Lower leg skin (tissue), 4 donors: ENCODE measurements at regions of chr7 and their contacts with region 1.

Region 1: DNA sequence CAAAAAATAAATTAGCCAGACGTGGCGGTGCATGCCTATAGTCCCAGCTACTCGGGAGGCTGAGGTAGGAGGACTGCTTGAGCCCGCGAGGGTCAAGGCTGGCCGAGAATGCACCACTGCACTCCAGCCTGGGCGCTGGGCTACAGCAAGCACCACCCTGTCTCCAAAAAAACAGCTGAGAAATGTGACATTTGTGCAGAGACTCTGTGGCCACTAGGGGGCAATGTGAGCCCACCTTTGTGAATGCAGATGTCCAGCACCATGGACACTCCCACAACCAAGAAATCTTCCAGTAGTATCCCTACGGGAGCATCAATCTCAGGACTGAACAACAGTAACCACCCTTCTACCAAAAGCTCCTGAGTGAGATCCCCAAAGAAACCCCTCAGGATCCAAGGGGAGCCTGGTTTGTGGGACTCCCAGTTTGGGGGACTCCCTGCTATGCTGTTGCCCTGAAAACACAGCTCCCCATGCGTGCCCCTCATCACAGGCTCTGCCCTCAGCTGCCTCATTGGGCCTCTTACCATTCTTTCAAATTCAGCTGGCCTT is 6.2 kb upstream of the AHCYL2 start:
- DNase-seq: peak; percentile 86 to 96
- H3K4me3 ChIP-seq: no peak overlapping the region
- CTCF ChIP-seq: peak in 1 of 3 donors; percentile 91
- POLR2A ChIP-seq: no peak

Region 2: GRCh38 chr7:128266883-128267607 is 951.5 kb before region 1 on chr7:
- intact Hi-C with region 1: no loop called
- DNase-seq: peak; percentile 71 to 90
- H3K4me3 ChIP-seq: no peak overlapping the region
- CTCF ChIP-seq: no peak
- POLR2A ChIP-seq: no peak

Region 3: DNA sequence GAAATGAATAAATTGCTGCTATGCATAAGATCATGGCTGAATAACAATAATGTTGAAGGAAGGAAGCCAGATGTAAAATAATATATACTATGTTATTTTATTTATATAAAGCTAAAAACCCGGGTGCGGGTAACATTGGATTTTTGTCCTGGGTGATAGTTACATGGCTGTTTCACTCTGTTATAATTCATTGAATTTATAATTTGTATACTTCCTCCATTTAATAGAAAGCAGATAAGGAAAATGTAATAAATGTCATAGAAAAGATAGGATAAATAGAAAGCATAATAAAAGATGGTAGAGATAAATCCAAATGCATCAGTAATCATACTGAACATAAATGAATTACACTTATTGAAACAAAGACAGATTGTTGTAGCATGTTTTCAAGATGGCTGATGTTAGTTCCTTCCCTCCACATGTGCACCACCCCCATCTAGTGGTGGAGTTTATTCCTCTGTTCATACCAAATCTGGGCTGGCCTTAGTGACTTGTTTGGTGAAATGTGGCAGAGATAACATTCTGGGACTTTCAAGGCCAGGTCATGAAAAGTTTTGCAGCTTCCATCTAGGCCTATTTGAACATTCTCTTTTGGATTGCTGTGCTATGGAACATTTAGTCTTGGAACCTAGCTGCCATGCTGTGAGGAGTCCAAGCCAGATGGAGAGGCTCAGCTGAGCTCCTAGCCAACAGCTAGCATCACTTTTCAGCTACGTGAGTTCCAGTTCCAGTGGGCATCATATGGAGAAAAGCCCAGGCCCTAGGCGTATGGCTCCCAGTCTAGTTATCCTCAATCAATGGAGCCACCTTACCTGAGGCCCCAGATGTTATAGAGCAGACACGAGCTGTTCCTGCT is 53.1 kb after region 1 on chr7:
- intact Hi-C with region 1: loop called (anchors 10 kb)
- DNase-seq: peak in 1 of 2 donors; percentile 46
- H3K4me3 ChIP-seq: no peak overlapping the region
- CTCF ChIP-seq: no peak
- POLR2A ChIP-seq: no peak

Region 4: DNA sequence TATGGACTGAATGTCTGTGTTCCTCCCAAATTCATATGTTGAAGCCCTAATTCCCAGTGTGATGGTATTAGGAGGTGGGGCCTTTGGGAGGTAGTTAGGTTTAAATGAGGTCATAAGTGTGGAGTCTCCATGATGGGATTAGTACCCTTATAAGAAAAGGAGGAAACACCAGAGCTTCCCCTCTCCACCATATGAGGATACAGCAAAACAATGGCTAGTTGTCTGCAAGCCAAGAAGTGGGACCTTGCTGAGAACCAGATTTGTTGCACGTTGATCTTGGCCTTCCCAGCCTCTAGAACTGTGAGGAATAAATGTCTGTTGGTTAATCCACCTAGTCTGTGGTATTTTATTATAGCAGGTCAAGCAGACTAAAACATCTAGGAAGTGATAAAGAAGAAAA is 108.5 kb after region 1 on chr7:
- intact Hi-C with region 1: no loop called
- DNase-seq: no peak
- H3K4me3 ChIP-seq: no peak overlapping the region
- CTCF ChIP-seq: no peak
- POLR2A ChIP-seq: no peak

Region 5: DNA sequence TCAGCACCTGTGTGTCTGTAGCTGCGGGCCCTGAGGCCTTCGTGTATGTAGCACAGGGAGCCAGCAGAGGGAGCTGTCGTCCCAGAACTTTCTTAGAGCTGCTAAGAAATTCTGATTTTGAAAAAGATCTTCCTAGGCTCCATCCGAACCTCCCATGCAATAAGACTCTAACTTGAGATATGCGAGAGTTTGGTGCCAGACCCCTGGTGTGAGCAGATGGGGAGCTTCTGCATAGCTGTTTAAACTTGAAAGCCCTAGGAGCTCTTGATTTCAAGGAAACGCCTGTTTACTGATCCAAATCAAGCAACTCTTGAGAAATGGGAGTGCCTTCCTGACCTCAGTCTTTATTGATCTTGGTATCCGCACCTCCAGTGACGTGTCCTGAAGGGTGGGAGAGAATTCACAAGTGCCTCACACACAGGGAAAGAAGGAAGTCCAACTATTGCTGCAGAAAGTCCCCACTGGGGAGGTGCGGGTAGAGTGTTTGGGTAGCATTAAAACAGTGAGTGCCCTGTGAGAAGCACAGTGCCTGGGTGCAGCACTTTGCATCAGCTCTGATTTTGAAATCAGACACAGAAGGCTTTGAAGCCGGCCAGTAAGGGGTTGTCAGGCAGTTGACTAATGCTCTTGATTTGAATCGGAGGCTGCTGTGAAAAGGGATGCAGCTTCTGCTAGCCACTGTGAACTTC is 149.3 kb after region 1 on chr7:
- intact Hi-C with region 1: loop called (anchors 10 kb)
- DNase-seq: peak; percentile 64 to 95
- H3K4me3 ChIP-seq: no peak overlapping the region
- CTCF ChIP-seq: peak in 1 of 3 donors; percentile 81
- POLR2A ChIP-seq: no peak